MCF 10A (cell line): ENCODE measurements at regions of chr6 and their contacts with region 1.

Region 1: DNA sequence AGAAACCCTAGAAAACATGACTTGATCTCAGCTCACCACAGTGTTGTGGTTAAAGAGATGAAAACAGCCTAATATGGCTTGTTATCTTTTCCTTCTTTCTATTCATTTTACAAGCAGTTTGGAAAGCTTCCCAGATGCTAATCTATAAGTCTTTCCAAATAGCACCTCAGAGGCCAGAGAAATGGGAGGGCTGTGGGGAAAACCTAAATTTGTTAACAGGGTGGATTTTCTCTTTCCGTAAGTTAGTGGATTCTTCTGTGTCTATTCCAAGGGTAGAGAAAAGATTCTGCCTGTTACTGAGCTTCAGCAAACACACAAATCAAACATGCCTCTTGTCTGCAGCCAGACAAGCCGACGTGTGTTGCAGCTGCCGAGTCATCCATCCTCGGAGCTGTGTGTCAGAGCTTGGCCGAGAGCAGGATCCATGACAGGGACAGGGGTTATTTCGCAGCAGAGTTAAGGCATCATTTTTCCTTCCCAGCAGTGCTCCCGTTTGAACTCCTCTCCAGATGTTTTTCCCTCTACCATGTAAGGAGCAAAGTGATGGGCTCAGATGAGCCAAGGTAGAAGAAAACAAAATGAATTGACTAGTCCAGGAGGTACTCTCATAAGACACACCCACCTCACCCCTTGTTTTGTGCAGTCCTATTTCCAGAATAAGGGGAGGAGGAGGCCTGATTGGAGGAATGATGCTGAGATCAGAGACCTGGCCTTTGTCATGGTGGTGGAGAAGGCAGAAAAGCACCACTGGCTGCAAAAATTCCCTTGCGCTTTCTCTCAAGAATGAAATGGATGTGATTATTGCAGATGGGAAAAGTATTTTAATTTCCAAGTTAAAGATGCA is 560.0 kb downstream of the C6orf118 start:
- DNase-seq: peak; percentile 55
- H3K4me3 Mint-ChIP-seq: peak overlapping the region; percentile 61
- H3K27ac Mint-ChIP-seq: peak overlapping the region; percentile 29
- H3K4me1 Mint-ChIP-seq: peaks cover 14% of the 10 kb centered on the region
- H3K27me3 Mint-ChIP-seq: no peaks in the 10 kb centered on the region
- CTCF ChIP-seq: no peak

Region 2: DNA sequence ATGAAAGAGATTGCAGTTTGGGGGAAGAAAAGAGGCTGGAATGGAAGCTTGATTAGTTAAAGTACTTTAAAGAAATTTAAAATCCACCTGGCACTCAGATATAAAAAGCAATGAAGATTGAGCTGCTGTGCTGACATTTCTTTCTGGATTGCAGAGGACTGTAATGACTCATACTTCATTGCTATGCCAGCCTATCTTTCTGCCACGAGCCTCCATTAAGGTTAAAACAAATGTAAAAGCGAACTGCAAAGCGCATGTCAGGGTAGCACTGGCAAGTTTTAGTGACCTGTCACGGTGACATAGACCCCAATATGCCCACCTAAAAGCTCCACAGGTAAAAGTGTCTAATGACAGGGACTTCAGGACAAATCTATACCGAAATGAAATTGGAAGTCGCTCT is 110.4 kb after region 1 on chr6:
- CTCF ChIA-PET with region 1: no interaction called
- POLR2A ChIA-PET with region 1: no interaction called
- intact Hi-C with region 1: loop called (anchors 10 kb)
- DNase-seq: peak; percentile 32
- H3K4me3 Mint-ChIP-seq: peak overlapping the region; percentile 69
- H3K27ac Mint-ChIP-seq: peak overlapping the region; percentile 35
- H3K4me1 Mint-ChIP-seq: peaks cover 8% of the 10 kb centered on the region
- H3K27me3 Mint-ChIP-seq: no peaks in the 10 kb centered on the region
- CTCF ChIP-seq: no peak